ENCODE measurements at regions of chr17 and their contacts with region 1.

Region 1: GRCh38 chr17:58447039-58447975 is 30.0 kb upstream of the RNF43 start:
- DNase-seq: peak; percentile 74
- ATAC-seq: peak; percentile 87
- H3K4me3 ChIP-seq: no peak overlapping the region
- H3K4me3 Mint-ChIP-seq: no peak overlapping the region
- H3K27ac ChIP-seq: no peak overlapping the region
- H3K27ac Mint-ChIP-seq: peak overlapping the region; percentile 13
- H3K4me1 ChIP-seq: no peaks in the 10 kb centered on the region
- H3K4me1 Mint-ChIP-seq: peaks cover 11% of the 10 kb centered on the region
- H3K27me3 ChIP-seq: no peaks in the 10 kb centered on the region
- H3K27me3 Mint-ChIP-seq: no peaks in the 10 kb centered on the region
- CTCF ChIP-seq: peak; percentile 71

Region 2: DNA sequence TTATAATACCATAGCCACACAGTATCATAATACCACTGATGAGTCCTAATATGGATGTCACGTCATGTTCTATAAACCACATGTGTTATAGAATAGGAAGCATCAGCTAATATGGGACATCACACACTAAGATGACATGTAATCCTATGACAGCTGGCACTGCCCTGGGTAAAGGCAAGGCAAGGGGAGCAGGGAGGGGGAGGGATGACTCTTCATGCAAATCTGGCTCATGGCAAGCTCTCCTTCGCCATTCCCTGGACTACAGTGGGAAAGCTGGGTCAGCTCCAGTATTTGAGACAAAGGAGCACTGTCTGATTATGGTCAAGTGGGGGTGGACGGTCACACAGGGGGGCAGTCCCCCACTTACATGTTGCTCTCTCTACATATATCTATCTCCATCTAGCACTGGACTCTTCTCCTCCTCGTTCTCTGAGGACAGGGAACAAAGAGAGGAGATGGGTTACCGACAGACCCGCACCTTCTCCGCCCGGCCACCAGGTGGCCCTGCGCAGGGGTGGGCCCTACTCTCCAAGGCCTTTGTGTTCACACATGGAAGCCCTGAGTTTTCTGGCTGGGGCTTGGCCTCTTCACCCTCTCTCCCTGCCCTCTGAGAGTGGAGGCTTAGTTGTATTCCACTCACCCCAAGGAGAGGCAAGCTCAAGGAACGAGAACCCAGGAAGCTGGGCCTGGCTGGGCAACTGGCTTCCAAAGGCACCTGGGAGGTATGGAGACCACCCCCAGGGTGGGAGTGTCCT is 143.2 kb before region 1 on chr17:
- CTCF ChIA-PET with region 1: interaction called, 11 read pairs
- POLR2A ChIA-PET with region 1: interaction called, 4 read pairs
- intact Hi-C with region 1: loop called (anchors 1 kb)
- DNase-seq: peak; percentile 70
- ATAC-seq: peak; percentile 91
- H3K4me3 ChIP-seq: no peak overlapping the region
- H3K4me3 Mint-ChIP-seq: no peak overlapping the region
- H3K27ac ChIP-seq: no peak overlapping the region
- H3K27ac Mint-ChIP-seq: peak overlapping the region; percentile 72
- H3K4me1 ChIP-seq: peaks cover 3 to 14% of the 10 kb centered on the region in 2 donors
- H3K4me1 Mint-ChIP-seq: peaks cover 11% of the 10 kb centered on the region
- H3K27me3 ChIP-seq: no peaks in the 10 kb centered on the region
- H3K27me3 Mint-ChIP-seq: no peaks in the 10 kb centered on the region
- CTCF ChIP-seq: peak; percentile 81

Region 3: GRCh38 chr17:58344047-58344790 is 103.1 kb before region 1 on chr17:
- CTCF ChIA-PET with region 1: interaction called, 21 read pairs
- POLR2A ChIA-PET with region 1: no interaction called
- intact Hi-C with region 1: no loop called
- DNase-seq: peak; percentile 95
- ATAC-seq: peak; percentile 85
- H3K4me3 ChIP-seq: peak overlapping the region; percentile 56 to 82 (median 62)
- H3K4me3 Mint-ChIP-seq: peak overlapping the region; percentile 88
- H3K27ac ChIP-seq: peak overlapping the region; percentile 98 to 99
- H3K27ac Mint-ChIP-seq: peak overlapping the region; percentile 94
- H3K4me1 ChIP-seq: peaks cover 72 to 73% of the 10 kb centered on the region in 2 donors
- H3K4me1 Mint-ChIP-seq: peaks cover 82% of the 10 kb centered on the region
- H3K27me3 ChIP-seq: no peaks in the 10 kb centered on the region
- H3K27me3 Mint-ChIP-seq: no peaks in the 10 kb centered on the region
- CTCF ChIP-seq: no peak

Region 4: GRCh38 chr17:58358408-58359172 is 88.7 kb before region 1 on chr17:
- CTCF ChIA-PET with region 1: no interaction called
- POLR2A ChIA-PET with region 1: no interaction called
- intact Hi-C with region 1: no loop called
- DNase-seq: no peak
- ATAC-seq: no peak
- H3K4me3 ChIP-seq: no peak overlapping the region
- H3K4me3 Mint-ChIP-seq: no peak overlapping the region
- H3K27ac ChIP-seq: no peak overlapping the region
- H3K27ac Mint-ChIP-seq: no peak overlapping the region
- H3K4me1 ChIP-seq: peaks cover 0 to 4% of the 10 kb centered on the region in 2 donors
- H3K4me1 Mint-ChIP-seq: peaks cover 5% of the 10 kb centered on the region
- H3K27me3 ChIP-seq: no peaks in the 10 kb centered on the region
- H3K27me3 Mint-ChIP-seq: no peaks in the 10 kb centered on the region
- CTCF ChIP-seq: no peak

Region 5: DNA sequence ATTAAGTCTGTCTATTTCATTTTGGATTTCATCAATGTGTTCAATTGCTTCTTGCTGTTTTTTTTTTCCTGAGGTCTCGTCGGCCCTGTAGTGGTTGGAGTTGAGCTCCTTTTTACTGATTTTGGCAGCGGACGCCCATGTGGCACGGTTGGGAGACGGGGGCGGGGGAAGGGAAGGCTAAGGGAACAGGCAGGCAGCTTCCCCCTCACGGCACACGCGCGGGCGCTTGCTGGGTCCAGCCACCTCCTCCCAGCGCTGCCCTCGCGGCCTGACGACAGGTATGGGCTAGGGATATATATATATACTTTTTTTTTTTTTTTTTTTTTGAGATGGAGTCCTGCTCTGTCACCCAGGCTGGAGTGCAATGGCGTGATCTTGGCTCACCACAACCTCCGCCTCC is 29.5 kb after region 1 on chr17:
- CTCF ChIA-PET with region 1: no interaction called
- POLR2A ChIA-PET with region 1: interaction called, 12 read pairs
- intact Hi-C with region 1: no loop called
- DNase-seq: no peak
- ATAC-seq: no peak
- H3K4me3 ChIP-seq: no peak overlapping the region
- H3K4me3 Mint-ChIP-seq: no peak overlapping the region
- H3K27ac ChIP-seq: no peak overlapping the region
- H3K27ac Mint-ChIP-seq: no peak overlapping the region
- H3K4me1 ChIP-seq: no peaks in the 10 kb centered on the region
- H3K4me1 Mint-ChIP-seq: no peaks in the 10 kb centered on the region
- H3K27me3 ChIP-seq: no peaks in the 10 kb centered on the region
- H3K27me3 Mint-ChIP-seq: no peaks in the 10 kb centered on the region
- CTCF ChIP-seq: no peak

Measured in B cell (primary cell).